Activated naive CD4-positive, alpha-beta T cell treated with anti-CD3 and anti-CD28 coated beads, Interleukin-2, amount 10 ng/mL, durations not matched to agents 7 days and 5 days (primary cell): ENCODE measurements at regions of chr6 and their contacts with region 1.

Region 1: DNA sequence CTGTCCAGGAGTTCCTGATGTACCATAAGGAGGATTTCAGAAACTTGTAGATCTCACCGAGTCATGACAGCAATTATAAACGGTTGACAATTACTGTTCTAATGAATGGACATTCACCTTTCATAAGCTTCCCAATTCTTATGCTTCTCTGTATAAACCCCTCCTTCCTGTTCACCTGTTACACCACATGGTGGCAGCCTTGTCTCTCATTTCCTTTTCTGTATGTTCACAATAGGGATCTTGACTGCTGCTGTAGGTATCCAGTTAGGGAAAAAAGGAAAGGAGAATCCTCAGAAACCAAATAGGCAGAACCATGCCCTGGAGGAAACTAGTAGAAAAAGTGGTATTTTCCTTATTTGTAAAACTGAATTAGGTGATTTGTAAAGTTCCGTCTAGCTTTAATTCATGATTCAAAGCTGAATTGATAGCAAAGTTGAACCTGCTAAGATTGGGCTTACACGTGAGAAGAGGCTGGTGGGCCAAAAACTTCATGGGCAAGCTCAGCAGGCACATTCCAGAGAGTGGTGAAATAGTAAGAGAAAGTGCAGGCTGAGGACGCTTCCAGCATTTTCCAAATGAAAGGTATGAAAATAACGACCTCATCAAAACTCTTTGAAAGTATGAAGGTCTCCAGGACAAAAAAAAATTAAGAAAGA is 29.0 kb upstream of the TBPL1 start:
- DNase-seq: peak; percentile 70
- H3K4me3 Mint-ChIP-seq: no peak overlapping the region
- H3K27ac Mint-ChIP-seq: no peak overlapping the region
- H3K4me1 Mint-ChIP-seq: no peaks in the 10 kb centered on the region
- H3K27me3 Mint-ChIP-seq: peaks cover 13% of the 10 kb centered on the region

Region 2: DNA sequence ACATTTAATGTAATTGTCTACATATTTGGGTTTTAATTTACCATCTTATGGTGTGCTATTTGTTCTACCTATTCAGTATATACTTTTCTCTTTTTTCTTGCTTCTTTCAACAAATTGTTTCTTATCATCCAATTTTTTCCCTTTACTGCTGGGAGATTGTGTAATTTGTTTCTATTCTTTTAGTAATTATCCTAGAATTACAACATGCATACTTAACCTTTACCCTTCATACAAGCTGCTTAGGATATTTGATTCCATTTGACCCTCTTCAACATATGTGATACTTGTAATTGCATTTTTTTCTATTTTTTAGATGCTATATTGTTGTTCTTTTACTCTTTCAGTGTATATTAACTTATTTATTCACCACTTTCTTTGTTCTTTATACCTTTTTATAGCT is 13.8 kb after region 1 on chr6:
- CTCF ChIA-PET with region 1: interaction called, 10 read pairs
- DNase-seq: no peak
- H3K4me3 Mint-ChIP-seq: no peak overlapping the region
- H3K27ac Mint-ChIP-seq: no peak overlapping the region
- H3K4me1 Mint-ChIP-seq: no peaks in the 10 kb centered on the region
- H3K27me3 Mint-ChIP-seq: peaks cover 21% of the 10 kb centered on the region

Region 3: DNA sequence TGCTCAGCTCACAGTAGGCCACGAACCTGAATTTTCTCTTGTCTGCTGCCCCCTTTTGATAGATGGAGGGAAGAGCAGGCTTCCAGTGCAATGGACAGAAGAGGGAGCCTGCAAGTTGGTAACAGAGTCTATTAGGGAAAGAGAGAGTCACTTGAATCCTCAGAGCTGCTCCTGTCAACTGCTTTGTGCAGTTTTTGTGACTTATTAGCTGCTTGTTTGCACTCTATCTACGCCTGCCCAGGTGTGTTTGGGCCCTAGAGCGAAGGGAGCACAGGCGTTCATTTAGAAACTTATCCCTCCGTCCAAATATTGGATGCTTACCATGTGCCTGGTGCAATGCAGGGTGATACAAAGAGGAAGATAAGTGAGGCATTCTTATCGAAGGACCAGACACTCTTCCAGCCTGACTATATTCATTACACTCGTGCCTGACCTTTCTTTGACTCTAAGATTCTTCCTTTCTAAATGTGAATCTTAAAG is 139.9 kb after region 1 on chr6:
- CTCF ChIA-PET with region 1: interaction called, 129 read pairs
- DNase-seq: peak; percentile 75
- H3K4me3 Mint-ChIP-seq: no peak overlapping the region
- H3K27ac Mint-ChIP-seq: no peak overlapping the region
- H3K4me1 Mint-ChIP-seq: no peaks in the 10 kb centered on the region
- H3K27me3 Mint-ChIP-seq: peaks cover 10% of the 10 kb centered on the region

Region 4: GRCh38 chr6:134090591-134090990 is 166.5 kb after region 1 on chr6:
- CTCF ChIA-PET with region 1: interaction called, 188 read pairs
- DNase-seq: no peak
- H3K4me3 Mint-ChIP-seq: no peak overlapping the region
- H3K27ac Mint-ChIP-seq: no peak overlapping the region
- H3K4me1 Mint-ChIP-seq: peaks cover 4% of the 10 kb centered on the region
- H3K27me3 Mint-ChIP-seq: peaks cover 32% of the 10 kb centered on the region

Region 5: DNA sequence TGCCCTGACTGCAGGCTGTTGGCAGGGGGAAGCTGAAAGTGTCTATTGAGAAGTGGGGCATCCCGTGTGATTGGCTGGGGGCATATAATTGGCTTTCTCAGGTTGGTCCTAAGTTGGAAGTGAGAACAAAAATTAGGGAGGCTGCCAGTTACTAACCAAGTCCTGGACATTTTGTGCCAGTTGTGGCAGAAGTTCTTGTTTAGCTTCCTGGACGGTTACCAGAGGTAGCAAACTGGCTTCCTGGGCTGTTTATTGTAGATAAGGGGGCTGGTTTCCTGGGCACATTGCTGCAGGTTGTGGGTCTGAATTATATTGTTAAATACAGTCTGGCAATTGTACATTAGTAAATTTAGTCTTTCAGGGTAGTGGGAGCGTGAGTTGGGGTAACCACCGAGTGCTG is 178.9 kb after region 1 on chr6:
- CTCF ChIA-PET with region 1: interaction called, 188 read pairs
- DNase-seq: no peak
- H3K4me3 Mint-ChIP-seq: no peak overlapping the region
- H3K27ac Mint-ChIP-seq: no peak overlapping the region
- H3K4me1 Mint-ChIP-seq: no peaks in the 10 kb centered on the region
- H3K27me3 Mint-ChIP-seq: peaks cover 33% of the 10 kb centered on the region

Region 6: GRCh38 chr6:134422426-134423231 is 498.6 kb after region 1 on chr6:
- CTCF ChIA-PET with region 1: no interaction called
- DNase-seq: no peak
- H3K4me3 Mint-ChIP-seq: no peak overlapping the region
- H3K27ac Mint-ChIP-seq: no peak overlapping the region
- H3K4me1 Mint-ChIP-seq: peaks cover 16% of the 10 kb centered on the region
- H3K27me3 Mint-ChIP-seq: peaks cover 12% of the 10 kb centered on the region